Colonic mucosa (tissue), 4 donors: ENCODE measurements at regions of chr19 and their contacts with region 1.

Region 1: GRCh38 chr19:10580979-10581631 is 6.0 kb downstream of the AP1M2 start:
- DNase-seq: peak; percentile 89
- H3K4me3 ChIP-seq: no peak overlapping the region
- H3K27ac ChIP-seq: no peak overlapping the region
- H3K4me1 ChIP-seq: no peaks in the 10 kb centered on the region
- H3K27me3 ChIP-seq: no peaks in the 10 kb centered on the region
- CTCF ChIP-seq: peak; percentile 99

Region 2: GRCh38 chr19:10644260-10645007 is 63.3 kb after region 1 on chr19:
- intact Hi-C with region 1: loop called (anchors 1 kb)
- DNase-seq: peak; percentile 87
- H3K4me3 ChIP-seq: no peak overlapping the region
- H3K27ac ChIP-seq: no peak overlapping the region
- H3K4me1 ChIP-seq: no peaks in the 10 kb centered on the region
- H3K27me3 ChIP-seq: no peaks in the 10 kb centered on the region
- CTCF ChIP-seq: peak; percentile 80